ENCODE measurements at regions of chr14 and their contacts with region 1.

Region 1: DNA sequence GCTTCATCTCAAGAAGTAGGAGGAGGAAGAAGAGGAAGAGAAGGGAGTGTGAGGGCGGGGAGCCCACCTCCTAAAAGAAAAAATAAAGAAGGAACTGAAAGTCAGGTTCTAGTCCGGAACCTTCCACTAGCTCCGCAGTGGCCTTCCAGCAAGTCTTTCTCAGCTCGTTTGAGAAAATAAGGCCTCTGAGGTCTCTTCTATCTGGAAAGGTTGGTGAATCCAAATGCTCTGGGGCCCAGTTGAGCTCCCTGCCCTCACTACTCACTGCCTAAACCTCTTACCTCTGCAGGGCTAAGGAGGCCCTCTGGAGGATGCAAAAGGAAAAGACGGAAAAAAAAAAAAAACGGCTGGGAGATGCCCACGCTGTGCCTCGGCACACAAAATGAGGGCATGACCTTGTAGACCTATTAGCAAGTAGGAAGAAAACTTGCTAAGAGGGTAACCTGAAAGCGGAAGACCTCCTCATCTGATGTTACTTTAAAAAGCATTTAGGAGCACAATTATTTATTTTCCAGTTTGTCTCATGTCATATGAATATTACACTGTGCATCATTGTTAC is 35.9 kb downstream of the FBLN5 start:
- DNase-seq: peak; percentile 61 to 75 (median 71)
- ATAC-seq: peak; percentile 91
- H3K4me3 ChIP-seq: no peak overlapping the region
- H3K27ac ChIP-seq: peak overlapping the region in 3 of 4 donors; percentile 19 to 50 (median 37)
- H3K4me1 ChIP-seq: peaks cover 28% of the 10 kb centered on the region
- H3K27me3 ChIP-seq: no peaks in the 10 kb centered on the region
- CTCF ChIP-seq: peak; percentile 22 to 86 (median 68)
- POLR2A ChIP-seq: no peak

Region 2: DNA sequence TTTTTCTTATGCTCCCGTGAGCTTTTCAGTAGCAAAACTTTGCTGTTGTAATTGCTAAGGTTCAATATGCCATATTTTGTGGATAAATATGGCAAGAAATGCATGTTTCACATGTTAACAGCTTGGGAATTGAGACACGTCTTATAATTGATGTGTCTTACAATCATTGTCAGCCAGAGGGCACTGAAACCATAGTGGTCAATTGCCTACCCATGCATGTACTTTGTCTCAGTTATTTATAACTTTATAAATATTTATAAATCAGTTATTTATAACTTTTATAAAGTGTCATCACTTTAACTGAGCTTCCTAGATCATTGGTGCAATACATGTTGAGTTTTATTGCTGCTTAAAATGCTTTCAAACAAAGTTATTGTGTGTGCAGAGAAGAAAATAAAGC is 261.6 kb before region 1 on chr14:
- intact Hi-C with region 1: loop called (anchors 10 kb)
- DNase-seq: peak in 3 of 4 donors; percentile 19 to 36 (median 35)
- ATAC-seq: peak; percentile 67
- H3K4me3 ChIP-seq: no peak overlapping the region
- H3K27ac ChIP-seq: no peak overlapping the region
- H3K4me1 ChIP-seq: peaks cover 27% of the 10 kb centered on the region
- H3K27me3 ChIP-seq: no peaks in the 10 kb centered on the region
- CTCF ChIP-seq: peak in 6 of 7 experiments; percentile 31 to 76 (median 58)
- POLR2A ChIP-seq: no peak

Measured in body of pancreas (tissue), 4 donors.